ENCODE measurements at regions of chr3 and their contacts with region 1.

Region 1: DNA sequence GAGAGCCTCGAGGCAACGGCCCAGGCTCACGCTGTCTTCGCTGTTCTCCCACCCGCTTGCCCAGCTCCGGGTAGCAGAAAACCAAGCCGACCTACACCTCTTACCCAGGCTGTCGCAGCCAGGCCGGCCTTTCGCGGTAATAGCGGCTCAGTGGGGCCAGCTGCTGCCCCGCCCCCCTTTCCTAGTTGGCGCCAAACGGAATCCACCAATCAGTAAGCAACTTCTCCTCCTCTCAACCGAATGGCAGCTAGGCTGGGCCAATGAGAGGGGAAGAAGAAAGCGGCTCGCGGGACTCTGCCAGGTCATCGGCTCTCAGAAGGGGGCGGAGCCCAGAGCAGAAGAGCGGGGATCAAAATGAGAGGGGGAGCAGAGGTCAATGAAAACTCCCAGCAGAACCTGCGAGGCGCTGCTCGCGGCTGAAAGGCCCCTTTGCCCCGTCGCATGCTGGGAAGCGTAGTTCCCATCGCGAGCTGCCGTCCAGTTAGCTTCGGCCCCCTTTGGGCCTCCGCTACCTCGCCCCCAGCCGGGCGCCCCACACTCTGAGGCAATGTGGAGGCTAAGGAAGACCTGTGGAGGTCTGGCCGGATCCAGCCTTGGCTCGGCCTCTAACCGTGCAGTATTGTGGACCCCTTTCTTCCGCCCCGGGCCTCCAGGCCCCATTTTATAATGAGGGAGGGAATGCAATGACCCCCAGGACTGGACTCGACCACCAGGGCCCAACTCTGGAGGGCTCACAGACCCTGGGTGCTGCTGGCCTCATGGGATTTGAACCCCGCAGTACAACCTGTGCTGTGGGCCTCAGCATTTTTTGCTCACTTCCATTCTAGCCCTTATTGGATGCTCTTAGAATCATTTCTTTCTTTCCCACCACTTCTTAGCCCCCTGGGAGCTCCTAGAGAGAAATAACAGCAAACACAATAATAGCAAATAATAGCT is at the start of gene CDC25A:
- DNase-seq: peak; percentile 98
- H3K4me3 Mint-ChIP-seq: peak within 1 kb of the TSS; percentile 93
- H3K27ac Mint-ChIP-seq: peak within 1 kb of the TSS; percentile 89
- H3K4me1 Mint-ChIP-seq: peaks cover 22% of the 10 kb centered on the region
- H3K27me3 Mint-ChIP-seq: peaks cover 2% of the 10 kb centered on the region
- total RNA-seq, gene CDC25A: 57.0 and 60.2 TPM in 2 replicates

Region 2: DNA sequence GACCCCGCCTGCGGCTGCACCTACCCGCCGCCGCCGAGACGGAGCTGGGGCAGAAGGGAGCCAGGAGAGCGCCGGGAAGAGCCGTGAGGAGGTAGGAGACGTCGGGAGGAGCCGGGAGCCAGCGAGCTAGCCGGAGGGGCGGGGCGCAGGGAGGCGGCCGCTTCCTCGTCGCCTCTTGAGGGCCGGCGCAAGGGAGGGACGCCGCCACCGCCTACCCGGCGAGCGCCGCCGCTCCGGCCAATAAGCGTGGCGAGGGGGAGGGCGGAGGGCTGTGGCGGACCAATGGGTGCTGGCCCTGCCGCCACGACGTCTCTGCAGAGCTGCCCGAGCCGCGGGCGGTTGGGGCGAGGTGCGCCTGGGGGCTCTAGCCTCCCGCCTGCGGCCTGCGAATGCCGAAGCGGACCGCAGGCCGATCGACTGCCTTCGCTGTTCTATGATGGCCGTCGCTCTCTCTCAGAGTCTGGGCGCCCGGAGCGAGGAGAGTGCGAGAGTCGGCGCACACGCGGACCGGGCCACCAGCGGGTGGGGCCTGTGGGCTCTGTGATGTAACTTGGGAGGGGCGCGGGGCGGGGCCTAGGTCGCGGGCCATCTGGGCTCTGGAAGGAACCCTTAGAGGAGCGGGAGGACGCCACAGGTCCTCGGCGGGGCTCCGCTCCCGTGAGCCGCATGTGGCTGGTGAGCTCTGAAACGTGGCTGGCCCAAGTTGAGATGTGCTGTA is 99.6 kb before region 1 on chr3:
- intact Hi-C with region 1: loop called (anchors 1 kb)
- DNase-seq: peak; percentile 98
- H3K4me3 Mint-ChIP-seq: peak overlapping the region; percentile 95
- H3K27ac Mint-ChIP-seq: peak overlapping the region; percentile 98
- H3K4me1 Mint-ChIP-seq: peaks cover 25% of the 10 kb centered on the region
- H3K27me3 Mint-ChIP-seq: peaks cover 7% of the 10 kb centered on the region

Region 3: GRCh38 chr3:48142316-48142870 is 46.1 kb before region 1 on chr3:
- intact Hi-C with region 1: no loop called
- DNase-seq: no peak
- H3K4me3 Mint-ChIP-seq: no peak overlapping the region
- H3K27ac Mint-ChIP-seq: no peak overlapping the region
- H3K4me1 Mint-ChIP-seq: peaks cover 2% of the 10 kb centered on the region
- H3K27me3 Mint-ChIP-seq: no peaks in the 10 kb centered on the region

Region 4: GRCh38 chr3:48268381-48269183 is 80.0 kb after region 1 on chr3:
- intact Hi-C with region 1: loop called (anchors 2 kb)
- DNase-seq: peak; percentile 92
- H3K4me3 Mint-ChIP-seq: peak overlapping the region; percentile 73
- H3K27ac Mint-ChIP-seq: peak overlapping the region; percentile 96
- H3K4me1 Mint-ChIP-seq: peaks cover 37% of the 10 kb centered on the region
- H3K27me3 Mint-ChIP-seq: no peaks in the 10 kb centered on the region

Region 5: GRCh38 chr3:48439820-48440589 is 251.5 kb after region 1 on chr3 and contains the starts of genes CCDC51 and TMA7:
- intact Hi-C with region 1: loop called (anchors 2 kb)
- DNase-seq: peak; percentile 100
- H3K4me3 Mint-ChIP-seq: peak within 1 kb of the TSS; percentile 96
- H3K27ac Mint-ChIP-seq: peak within 1 kb of the TSS; percentile 92
- H3K4me1 Mint-ChIP-seq: peaks cover 20% of the 10 kb centered on the region
- H3K27me3 Mint-ChIP-seq: no peaks in the 10 kb centered on the region
- total RNA-seq, gene CCDC51: 24.4 and 25.9 TPM in 2 replicates
- total RNA-seq, gene TMA7: 272 and 275 TPM in 2 replicates

Region 6: GRCh38 chr3:49021813-49022687 is 833.5 kb after region 1 on chr3 and contains the start of gene NDUFAF3:
- intact Hi-C with region 1: loop called (anchors 10 kb)
- DNase-seq: peak; percentile 98
- H3K4me3 Mint-ChIP-seq: peak within 1 kb of the TSS; percentile 96
- H3K27ac Mint-ChIP-seq: peak within 1 kb of the TSS; percentile 98
- H3K4me1 Mint-ChIP-seq: peaks cover 35% of the 10 kb centered on the region
- H3K27me3 Mint-ChIP-seq: no peaks in the 10 kb centered on the region
- total RNA-seq, gene NDUFAF3: 123 and 126 TPM in 2 replicates

Measured in activated CD4-positive, alpha-beta T cell treated with anti-CD3 and anti-CD28 coated beads, Interleukin-2, amount 10 ng/mL, durations not matched to agents 24 days and 14 days (primary cell).